ENCODE measurements at regions of chr2 and their contacts with region 1.

Region 1: DNA sequence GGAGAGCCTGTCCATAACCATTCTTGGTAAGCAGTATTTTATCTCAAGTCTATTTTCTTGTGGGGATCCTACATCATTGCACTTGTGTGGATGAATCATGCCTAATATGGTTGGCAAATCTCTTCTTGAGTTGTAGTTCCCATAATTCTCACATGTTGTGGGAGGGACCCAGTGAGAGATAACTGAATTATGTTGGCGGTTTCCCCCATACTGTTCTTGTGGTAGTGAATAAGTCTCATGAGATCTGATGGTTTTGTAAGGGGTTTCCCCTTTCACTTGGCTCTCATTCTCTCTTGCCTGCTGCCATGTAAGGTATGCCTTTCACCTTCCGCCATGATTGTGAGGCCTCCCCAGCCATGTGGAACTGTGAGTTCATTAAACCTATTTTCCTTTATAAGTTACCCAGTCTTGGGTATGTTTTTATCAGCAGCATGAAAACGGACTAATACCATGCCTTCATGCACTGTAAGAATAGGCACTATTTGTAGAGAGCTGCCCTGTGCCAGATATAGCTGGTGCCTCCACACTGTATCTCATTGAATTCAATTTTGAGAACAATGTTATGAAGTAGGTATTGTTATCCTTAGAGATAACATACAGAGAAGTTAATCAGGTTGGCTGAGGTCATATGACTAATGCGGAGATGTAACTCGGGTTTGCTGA is 148.3 kb downstream of the PLCL1 start:
- DNase-seq: no peak
- ATAC-seq: no peak
- H3K4me3 ChIP-seq: no peak overlapping the region
- H3K27ac ChIP-seq: peak overlapping the region in 2 of 10 donors; percentile 62 to 64
- H3K4me1 ChIP-seq: peaks cover 4 to 74% (median 28%) of the 10 kb centered on the region in 9 donors
- H3K27me3 ChIP-seq: no peaks in the 10 kb centered on the region
- CTCF ChIP-seq: no peak

Region 2: GRCh38 chr2:197878792-197879191 is 73.9 kb before region 1 on chr2:
- intact Hi-C with region 1: loop called in 1 of 10 experiments (anchors 5 kb)
- DNase-seq: no peak
- ATAC-seq: peak in 1 of 8 donors; percentile 16
- H3K4me3 ChIP-seq: no peak overlapping the region
- H3K27ac ChIP-seq: peak overlapping the region in 6 of 10 donors; percentile 5 to 46 (median 14)
- H3K4me1 ChIP-seq: peaks cover 0 to 79% (median 50%) of the 10 kb centered on the region in 9 donors
- H3K27me3 ChIP-seq: no peaks in the 10 kb centered on the region
- CTCF ChIP-seq: no peak

Region 3: GRCh38 chr2:197915548-197916265 is 37.0 kb before region 1 on chr2:
- intact Hi-C with region 1: loop called in 1 of 10 experiments (anchors 5 kb)
- DNase-seq: no peak
- ATAC-seq: peak in 3 of 8 donors; percentile 35 to 59 (median 49)
- H3K4me3 ChIP-seq: no peak overlapping the region
- H3K27ac ChIP-seq: peak overlapping the region in 2 of 10 donors; percentile 16 to 50
- H3K4me1 ChIP-seq: peaks cover 0 to 55% (median 38%) of the 10 kb centered on the region in 9 donors
- H3K27me3 ChIP-seq: no peaks in the 10 kb centered on the region
- CTCF ChIP-seq: no peak